ENCODE measurements at regions of chr4 and their contacts with region 1.

Region 1: GRCh38 chr4:84750253-84750959 is 167.5 kb downstream of the CDS1 start:
- DNase-seq: peak; percentile 64
- H3K4me3 ChIP-seq: no peak overlapping the region
- H3K27ac ChIP-seq: no peak overlapping the region
- H3K4me1 ChIP-seq: no peaks in the 10 kb centered on the region
- H3K27me3 ChIP-seq: no peaks in the 10 kb centered on the region
- CTCF ChIP-seq: peak; percentile 32 to 35
- POLR2A ChIP-seq: no peak

Region 2: DNA sequence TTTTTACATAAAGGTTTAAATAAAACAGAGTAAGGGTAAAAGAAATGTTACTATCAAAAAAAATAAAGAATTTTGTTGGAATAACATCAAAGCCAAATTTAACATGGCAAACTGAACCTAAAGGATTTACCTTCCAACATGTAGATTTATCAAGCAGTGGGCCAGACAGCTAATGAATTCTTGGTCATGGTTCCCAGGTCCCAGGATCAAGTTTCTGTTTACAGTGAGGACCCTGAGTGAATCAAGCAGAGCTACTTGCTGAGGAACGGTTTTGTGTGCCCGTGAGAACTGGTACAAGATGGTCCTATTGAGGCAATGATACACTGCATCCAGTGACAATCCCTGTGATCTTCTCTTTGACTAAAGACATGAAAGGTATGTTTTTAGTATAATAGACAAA is 10.3 kb before region 1 on chr4:
- CTCF ChIA-PET with region 1: interaction called, 10 read pairs
- POLR2A ChIA-PET with region 1: no interaction called
- dilution Hi-C with region 1: no loop called
- intact Hi-C with region 1: no loop called
- DNase-seq: no peak
- H3K4me3 ChIP-seq: no peak overlapping the region
- H3K27ac ChIP-seq: no peak overlapping the region
- H3K4me1 ChIP-seq: no peaks in the 10 kb centered on the region
- H3K27me3 ChIP-seq: no peaks in the 10 kb centered on the region
- CTCF ChIP-seq: no peak
- POLR2A ChIP-seq: no peak

Region 3: GRCh38 chr4:84767168-84767567 is 16.8 kb after region 1 on chr4:
- CTCF ChIA-PET with region 1: interaction called, 25 read pairs
- POLR2A ChIA-PET with region 1: no interaction called
- dilution Hi-C with region 1: no loop called
- intact Hi-C with region 1: no loop called
- DNase-seq: no peak
- H3K4me3 ChIP-seq: no peak overlapping the region
- H3K27ac ChIP-seq: no peak overlapping the region
- H3K4me1 ChIP-seq: no peaks in the 10 kb centered on the region
- H3K27me3 ChIP-seq: no peaks in the 10 kb centered on the region
- CTCF ChIP-seq: no peak
- POLR2A ChIP-seq: no peak

Measured in endothelial cell of umbilical vein (primary cell).